ENCODE measurements at regions of chr11 and their contacts with region 1.

Region 1: GRCh38 chr11:6655020-6655789 is 404 bp downstream of the DCHS1 start:
- DNase-seq: peak in 1 of 2 donors; percentile 87
- ATAC-seq: peak; percentile 69
- H3K4me3 ChIP-seq: peak overlapping the region; percentile 66 to 85
- H3K27ac ChIP-seq: peak overlapping the region; percentile 61 to 72
- H3K4me1 ChIP-seq: peaks cover 0 to 4% of the 10 kb centered on the region in 2 donors
- H3K27me3 ChIP-seq: no peaks in the 10 kb centered on the region

Region 2: DNA sequence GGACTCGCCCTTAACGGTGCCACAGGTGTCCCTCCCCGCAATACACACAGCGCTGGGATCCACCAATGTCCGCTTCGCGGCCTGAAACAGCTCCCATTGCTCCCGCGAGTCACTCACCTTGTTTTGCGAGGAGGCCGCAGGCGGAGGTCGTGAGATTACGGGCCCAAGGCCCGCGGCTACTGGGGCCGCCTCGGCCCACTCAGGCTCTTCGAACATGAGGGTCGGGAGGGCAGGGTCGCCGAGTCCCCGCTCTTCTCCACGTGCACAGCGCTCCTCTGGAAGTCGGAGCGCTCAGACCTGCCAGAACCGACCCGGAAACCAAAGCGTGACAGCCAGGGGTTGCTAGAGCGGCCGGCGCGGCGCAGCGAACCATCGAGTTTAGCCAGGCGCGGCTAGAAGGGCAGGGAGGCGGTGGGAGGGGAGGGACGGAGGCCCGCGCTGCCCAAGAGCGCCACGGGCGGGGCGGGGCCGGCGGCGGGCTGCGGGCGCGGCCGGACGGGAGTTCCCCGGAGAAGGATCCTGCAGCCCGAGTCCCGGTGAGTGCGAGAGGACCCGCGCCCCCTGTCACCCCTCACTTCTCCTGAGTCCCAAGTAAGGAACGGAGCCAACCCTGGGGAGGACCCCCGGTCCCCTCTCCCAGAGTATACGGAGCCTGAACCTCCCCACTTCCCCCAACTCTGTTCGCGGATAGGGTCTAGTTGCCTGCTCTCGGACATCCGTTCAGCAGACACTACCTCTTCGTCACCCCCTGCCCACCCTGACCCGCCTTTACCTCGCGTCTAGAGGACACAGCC is 51.7 kb before region 1 on chr11 and contains the starts of genes ILK and RRP8:
- intact Hi-C with region 1: loop called in 1 of 2 experiments (anchors 5 kb)
- DNase-seq: peak; percentile 95 to 97
- ATAC-seq: peak; percentile 94
- H3K4me3 ChIP-seq: peak within 1 kb of the TSS; percentile 80 to 92
- H3K27ac ChIP-seq: peak within 1 kb of the TSS; percentile 98
- H3K4me1 ChIP-seq: peaks cover 7% of the 10 kb centered on the region in 2 donors
- H3K27me3 ChIP-seq: no peaks in the 10 kb centered on the region
- total RNA-seq, gene ILK: 336 to 562 TPM
- total RNA-seq, gene RRP8: 18.8 to 22.2 TPM

Region 3: GRCh38 chr11:6619004-6619745 is 36.0 kb before region 1 on chr11 and contains the start of gene TPP1:
- intact Hi-C with region 1: loop called in 1 of 2 experiments (anchors 5 kb)
- DNase-seq: peak; percentile 93 to 94
- ATAC-seq: peak; percentile 95
- H3K4me3 ChIP-seq: peak within 1 kb of the TSS; percentile 55 to 74
- H3K27ac ChIP-seq: peak within 1 kb of the TSS in 1 of 2 donors; percentile 65
- H3K4me1 ChIP-seq: no peaks in the 10 kb centered on the region
- H3K27me3 ChIP-seq: no peaks in the 10 kb centered on the region
- total RNA-seq, gene TPP1: 79.5 to 125 TPM

Region 4: GRCh38 chr11:6693342-6694228 is 38.4 kb after region 1 on chr11:
- intact Hi-C with region 1: no loop called
- DNase-seq: peak in 1 of 2 donors; percentile 48
- ATAC-seq: no peak
- H3K4me3 ChIP-seq: no peak overlapping the region
- H3K27ac ChIP-seq: peak overlapping the region in 1 of 2 donors; percentile 51
- H3K4me1 ChIP-seq: peaks cover 2 to 10% of the 10 kb centered on the region in 2 donors
- H3K27me3 ChIP-seq: no peaks in the 10 kb centered on the region

Measured in aorta (tissue), 5 donors.